GM23248 (cell line): ENCODE measurements at regions of chr1 and their contacts with region 1.

Region 1: GRCh38 chr1:209860293-209860881 is 32.6 kb downstream of the UTP25 start:
- DNase-seq: peak; percentile 90
- H3K4me3 ChIP-seq: no peak overlapping the region
- H3K27ac ChIP-seq: no peak overlapping the region
- H3K4me1 ChIP-seq: no peaks in the 10 kb centered on the region
- H3K27me3 ChIP-seq: no peaks in the 10 kb centered on the region; the same call in 1 of the 2 replicates

Region 2: GRCh38 chr1:209435654-209436566 is 424.5 kb before region 1 on chr1:
- in situ Hi-C with region 1: no loop called
- DNase-seq: peak; percentile 75
- H3K4me3 ChIP-seq: no peak overlapping the region
- H3K27ac ChIP-seq: no peak overlapping the region
- H3K4me1 ChIP-seq: peaks cover 12% of the 10 kb centered on the region
- H3K27me3 ChIP-seq: no peaks in the 10 kb centered on the region

Region 3: GRCh38 chr1:209747580-209748262 is 112.7 kb before region 1 on chr1:
- in situ Hi-C with region 1: no loop called
- DNase-seq: peak; percentile 91
- H3K4me3 ChIP-seq: peak overlapping the region; percentile 45
- H3K27ac ChIP-seq: no peak overlapping the region
- H3K4me1 ChIP-seq: peaks cover 9% of the 10 kb centered on the region; the same call in 1 of the 2 replicates
- H3K27me3 ChIP-seq: no peaks in the 10 kb centered on the region

Region 4: GRCh38 chr1:209797978-209798639 is 62.3 kb before region 1 on chr1:
- in situ Hi-C with region 1: no loop called
- DNase-seq: peak; percentile 75
- H3K4me3 ChIP-seq: no peak overlapping the region
- H3K27ac ChIP-seq: no peak overlapping the region
- H3K4me1 ChIP-seq: peaks cover 13% of the 10 kb centered on the region
- H3K27me3 ChIP-seq: no peaks in the 10 kb centered on the region

Region 5: DNA sequence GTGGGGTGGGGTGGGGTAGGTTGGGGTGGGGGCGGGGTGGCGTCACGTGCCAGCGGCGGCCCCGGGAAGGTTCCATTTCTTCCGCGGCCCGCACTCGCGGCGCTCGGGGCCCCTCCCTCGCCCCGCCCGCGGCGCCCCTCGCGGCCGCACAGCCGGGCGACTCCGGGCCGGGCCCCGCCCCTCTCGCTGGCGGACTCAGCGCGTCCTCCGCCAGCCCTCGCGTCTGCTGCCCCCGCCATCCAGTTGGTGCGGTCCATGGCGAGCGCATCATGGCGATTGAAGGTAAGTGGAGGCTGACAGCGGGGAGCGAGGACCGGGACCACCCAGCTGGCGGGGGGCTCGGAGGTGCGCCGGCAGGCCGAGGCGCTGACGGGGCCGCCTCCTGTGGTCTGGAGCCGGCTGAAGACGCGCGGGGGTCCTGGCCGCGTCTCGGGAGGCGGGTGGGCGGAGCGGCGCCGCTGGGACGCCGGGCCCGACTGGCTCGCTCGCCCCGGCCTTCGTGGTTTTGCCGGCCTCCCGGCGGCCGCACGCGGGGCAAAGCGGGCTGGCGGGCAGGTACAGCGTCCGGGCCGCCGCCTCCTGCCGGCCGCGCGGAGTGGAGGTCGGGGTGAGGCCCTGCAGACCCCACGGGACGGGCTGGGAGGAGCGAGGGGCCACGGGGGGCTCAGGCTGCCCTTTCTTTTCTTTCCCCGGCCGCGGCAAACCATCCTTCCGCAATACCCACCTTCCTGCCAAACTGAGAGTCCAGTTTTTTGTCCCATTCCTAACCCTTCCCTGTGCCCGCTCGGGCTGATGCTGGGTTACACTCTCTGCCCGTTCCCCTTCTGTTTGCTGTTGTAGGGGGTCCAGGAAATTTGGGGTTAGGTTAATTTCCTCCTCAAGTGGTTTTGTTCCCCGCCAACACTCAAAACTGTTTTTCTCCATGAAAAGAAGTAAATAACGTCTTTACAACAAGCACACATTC is 77.9 kb after region 1 on chr1 and contains the start of gene SYT14:
- in situ Hi-C with region 1: no loop called
- DNase-seq: peak; percentile 72
- H3K4me3 ChIP-seq: peak within 1 kb of the TSS; percentile 75
- H3K27ac ChIP-seq: no peak within 1 kb of the TSS
- H3K4me1 ChIP-seq: no peaks in the 10 kb centered on the region
- H3K27me3 ChIP-seq: 0 out of 2 replicates have a peak, but pooled peaks cover 20% of the 10 kb centered on the region
- total RNA-seq, gene SYT14: 1.4 and 1.7 TPM in 2 replicates

Region 6: DNA sequence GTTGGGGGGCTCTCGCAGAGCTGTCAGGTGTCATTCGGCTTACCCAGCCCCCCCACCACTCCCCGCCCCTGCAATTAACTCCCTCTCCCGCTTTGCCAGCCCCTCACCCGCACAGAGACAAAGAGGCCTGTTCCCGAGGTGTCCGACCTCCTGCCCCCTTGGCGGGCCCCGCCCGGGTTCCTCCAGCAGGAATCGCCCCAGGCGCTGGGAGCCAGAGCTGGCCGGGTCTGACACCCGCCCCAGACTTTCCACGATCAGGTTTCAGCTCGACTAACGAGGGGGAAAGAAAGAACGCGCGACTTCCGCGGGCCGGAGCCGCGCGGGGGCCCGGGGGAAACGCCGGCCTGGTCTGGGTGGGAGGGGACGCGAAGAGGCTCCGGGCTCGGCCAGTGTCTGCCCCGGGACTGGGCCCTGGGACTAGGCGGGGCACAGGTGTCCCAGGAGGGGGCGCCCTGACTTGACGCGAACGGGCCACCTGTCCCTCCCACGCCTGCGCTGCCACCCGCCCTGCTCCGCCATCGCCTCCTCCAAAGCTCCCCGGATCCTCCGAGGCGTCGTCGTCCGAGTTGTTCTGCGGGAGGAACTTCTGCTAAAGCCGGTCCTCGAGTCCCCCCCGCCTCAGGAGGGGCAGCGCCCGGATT is 432.0 kb after region 1 on chr1:
- in situ Hi-C with region 1: loop called (anchors 25 kb)
- DNase-seq: peak; percentile 68
- H3K4me3 ChIP-seq: peak overlapping the region; percentile 70
- H3K27ac ChIP-seq: peak overlapping the region; percentile 20; the same call in 1 of the 2 replicates
- H3K4me1 ChIP-seq: peaks cover 32% of the 10 kb centered on the region
- H3K27me3 ChIP-seq: peaks cover 16% of the 10 kb centered on the region; the same call in 1 of the 2 replicates